ENCODE measurements at regions of chr11 and their contacts with region 1.

Region 1: GRCh38 chr11:124800226-124800929 is at the start of gene MSANTD2:
- DNase-seq: peak; percentile 82
- H3K4me3 ChIP-seq: peak within 1 kb of the TSS; percentile 59 to 98 (median 62)
- H3K27ac ChIP-seq: peak within 1 kb of the TSS; percentile 81
- H3K4me1 ChIP-seq: peaks cover 20% of the 10 kb centered on the region
- H3K27me3 ChIP-seq: no peaks in the 10 kb centered on the region
- CTCF ChIP-seq: no peak
- POLR2A ChIP-seq: peak; percentile 81
- total RNA-seq, gene MSANTD2: 17.0 and 23.2 TPM in 2 replicates

Region 2: GRCh38 chr11:124812876-124813275 is 12.5 kb after region 1 on chr11:
- CTCF ChIA-PET with region 1: interaction called, 13 read pairs
- POLR2A ChIA-PET with region 1: interaction called, 4 read pairs
- dilution Hi-C with region 1: no loop called
- intact Hi-C with region 1: no loop called
- DNase-seq: peak; percentile 55
- H3K4me3 ChIP-seq: no peak overlapping the region
- H3K27ac ChIP-seq: no peak overlapping the region
- H3K4me1 ChIP-seq: peaks cover 13% of the 10 kb centered on the region
- H3K27me3 ChIP-seq: peaks cover 0 to 4% of the 10 kb centered on the region in 2 experiments
- CTCF ChIP-seq: no peak
- POLR2A ChIP-seq: no peak

Measured in endothelial cell of umbilical vein (primary cell).